CD8-positive, alpha-beta memory T cell (primary cell): ENCODE measurements at regions of chr12 and their contacts with region 1.

Region 1: GRCh38 chr12:49842519-49843352 is at the start of gene BCDIN3D:
- DNase-seq: peak; percentile 88 to 94 (median 89)
- H3K4me3 ChIP-seq: peak within 1 kb of the TSS; percentile 96
- H3K4me3 Mint-ChIP-seq: peak within 1 kb of the TSS; percentile 90 to 97 (median 93)
- H3K27ac ChIP-seq: peak within 1 kb of the TSS; percentile 79
- H3K27ac Mint-ChIP-seq: peak within 1 kb of the TSS; percentile 89 to 97 (median 96)
- H3K4me1 ChIP-seq: peaks cover 33% of the 10 kb centered on the region
- H3K4me1 Mint-ChIP-seq: peaks cover 29 to 51% (median 44%) of the 10 kb centered on the region in 3 donors
- H3K27me3 ChIP-seq: no peaks in the 10 kb centered on the region
- H3K27me3 Mint-ChIP-seq: no peaks in the 10 kb centered on the region
- total RNA-seq, gene BCDIN3D: 6.5 to 7.6 TPM

Region 2: DNA sequence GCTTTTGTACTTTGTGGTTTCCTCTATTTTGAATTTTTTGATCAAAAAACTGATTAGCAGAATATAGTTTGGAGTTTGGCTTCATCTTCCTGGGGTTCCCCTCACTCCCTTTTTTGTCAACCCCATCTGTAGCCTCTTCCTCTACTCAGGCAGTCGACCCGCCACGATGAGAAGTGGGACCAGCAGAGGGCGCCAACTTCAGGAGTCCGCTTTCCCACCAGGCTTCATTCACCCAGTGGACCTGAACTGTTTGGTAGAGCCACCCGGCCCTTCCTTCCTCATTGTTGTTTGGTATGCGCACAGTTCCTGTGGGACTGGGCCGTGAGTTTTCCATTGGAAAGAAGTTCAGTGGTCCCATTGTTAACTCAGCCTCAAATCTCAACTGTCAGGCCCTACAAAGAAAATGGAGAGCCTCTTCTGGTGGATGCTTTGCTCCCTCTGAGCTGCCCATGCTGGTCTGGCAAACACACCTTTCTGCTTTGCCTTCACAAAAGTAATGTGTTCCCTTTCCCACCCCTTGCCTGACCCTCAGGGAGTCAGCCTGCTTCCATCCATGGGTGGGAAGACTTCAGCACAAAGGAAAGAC is 79.6 kb before region 1 on chr12:
- CTCF ChIA-PET with region 1: interaction called, 22 read pairs
- POLR2A ChIA-PET with region 1: no interaction called
- DNase-seq: peak; percentile 64 to 81 (median 73)
- H3K4me3 ChIP-seq: no peak overlapping the region
- H3K4me3 Mint-ChIP-seq: peak overlapping the region in 6 of 7 donors; percentile 45 to 58 (median 50)
- H3K27ac ChIP-seq: no peak overlapping the region
- H3K27ac Mint-ChIP-seq: peak overlapping the region; percentile 78 to 93 (median 89)
- H3K4me1 ChIP-seq: peaks cover 37% of the 10 kb centered on the region
- H3K4me1 Mint-ChIP-seq: peaks cover 47 to 59% (median 57%) of the 10 kb centered on the region in 3 donors
- H3K27me3 ChIP-seq: no peaks in the 10 kb centered on the region
- H3K27me3 Mint-ChIP-seq: no peaks in the 10 kb centered on the region

Region 3: DNA sequence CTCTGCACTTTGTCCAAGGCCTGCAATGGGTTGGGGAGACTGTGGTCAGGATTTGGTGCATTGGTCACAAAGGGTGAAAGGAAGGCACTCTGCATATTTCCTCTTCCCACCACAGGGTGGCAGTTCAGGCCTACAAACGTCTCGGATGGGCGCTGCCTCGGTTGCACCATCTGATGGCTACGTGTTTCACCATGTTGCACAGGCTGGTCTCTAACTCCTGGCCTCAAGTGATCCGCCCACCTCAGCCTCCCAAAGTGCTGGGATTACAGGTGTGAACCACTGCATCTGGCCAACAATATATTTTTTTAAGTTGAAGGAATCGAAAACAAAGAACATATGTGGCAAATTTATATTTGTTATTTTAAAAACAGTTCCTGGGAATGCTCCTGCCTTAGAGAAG is 66.3 kb before region 1 on chr12:
- CTCF ChIA-PET with region 1: interaction called, 16 read pairs
- POLR2A ChIA-PET with region 1: interaction called, 11 read pairs
- DNase-seq: peak in 4 of 5 donors; percentile 8 to 66 (median 38)
- H3K4me3 ChIP-seq: no peak overlapping the region
- H3K4me3 Mint-ChIP-seq: no peak overlapping the region
- H3K27ac ChIP-seq: no peak overlapping the region
- H3K27ac Mint-ChIP-seq: no peak overlapping the region
- H3K4me1 ChIP-seq: peaks cover 15% of the 10 kb centered on the region
- H3K4me1 Mint-ChIP-seq: peaks cover 12 to 19% (median 13%) of the 10 kb centered on the region in 3 donors
- H3K27me3 ChIP-seq: peaks cover 4% of the 10 kb centered on the region
- H3K27me3 Mint-ChIP-seq: peaks cover 24 to 27% of the 10 kb centered on the region in 2 donors

Region 4: DNA sequence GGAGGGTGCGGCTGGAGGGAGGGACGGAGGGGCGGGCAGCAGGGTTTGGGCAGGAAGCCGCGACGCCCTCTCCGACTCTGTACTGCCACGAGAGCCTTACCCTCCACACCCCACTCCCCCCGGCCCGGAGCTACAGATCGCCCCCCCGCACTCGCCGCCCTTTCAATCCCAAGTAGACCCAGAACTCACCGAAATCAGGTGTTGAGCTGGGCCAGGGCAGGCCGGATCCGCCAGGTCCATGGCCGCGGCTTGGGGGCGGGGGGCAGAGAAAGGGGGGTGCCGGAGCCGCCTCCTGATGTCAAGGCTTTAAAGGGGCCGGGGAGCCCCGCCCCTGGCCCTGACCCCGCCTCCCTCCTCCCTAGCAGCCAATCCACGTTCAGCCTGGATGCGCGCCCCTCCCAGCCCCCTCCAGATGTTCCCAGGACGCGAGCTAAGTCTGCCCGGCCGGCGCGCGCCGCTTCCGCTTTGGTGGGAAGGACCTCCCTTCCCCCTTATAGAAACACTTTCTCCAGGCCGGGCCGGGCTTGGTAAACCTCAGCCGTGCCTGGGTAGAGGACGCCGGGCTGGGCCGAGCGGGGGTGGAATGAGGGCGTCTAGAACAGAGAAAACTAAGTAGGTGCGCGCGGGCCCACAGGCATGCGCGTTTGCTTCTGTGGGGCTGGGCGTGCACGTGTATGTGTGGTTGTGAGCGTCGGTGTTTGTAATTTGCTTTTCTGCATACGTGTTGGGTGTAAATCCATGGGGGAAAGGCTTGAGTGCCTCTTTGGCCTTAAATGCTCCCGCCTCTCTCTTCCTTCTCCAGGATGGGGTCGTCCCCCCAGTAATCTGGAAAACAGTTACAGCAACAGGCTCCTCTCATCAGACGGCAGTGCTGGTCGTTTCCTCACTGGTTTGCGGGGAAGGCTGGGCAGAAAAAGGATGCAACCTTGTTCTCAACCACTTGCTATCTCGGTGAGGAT is 14.3 kb before region 1 on chr12 and contains the start of gene NCKAP5L:
- CTCF ChIA-PET with region 1: interaction called, 44 read pairs
- POLR2A ChIA-PET with region 1: interaction called, 11 read pairs
- DNase-seq: peak; percentile 92 to 96 (median 93)
- H3K4me3 ChIP-seq: peak within 1 kb of the TSS; percentile 69
- H3K4me3 Mint-ChIP-seq: peak within 1 kb of the TSS; percentile 92 to 99 (median 97)
- H3K27ac ChIP-seq: peak within 1 kb of the TSS; percentile 66
- H3K27ac Mint-ChIP-seq: peak within 1 kb of the TSS; percentile 81 to 97 (median 92)
- H3K4me1 ChIP-seq: peaks cover 16% of the 10 kb centered on the region
- H3K4me1 Mint-ChIP-seq: peaks cover 29 to 35% (median 35%) of the 10 kb centered on the region in 3 donors
- H3K27me3 ChIP-seq: no peaks in the 10 kb centered on the region
- H3K27me3 Mint-ChIP-seq: peaks cover 0 to 3% of the 10 kb centered on the region in 2 donors
- total RNA-seq, gene NCKAP5L: 4.8 to 5.5 TPM